ENCODE measurements at regions of chr1 and their contacts with region 1.

Region 1: DNA sequence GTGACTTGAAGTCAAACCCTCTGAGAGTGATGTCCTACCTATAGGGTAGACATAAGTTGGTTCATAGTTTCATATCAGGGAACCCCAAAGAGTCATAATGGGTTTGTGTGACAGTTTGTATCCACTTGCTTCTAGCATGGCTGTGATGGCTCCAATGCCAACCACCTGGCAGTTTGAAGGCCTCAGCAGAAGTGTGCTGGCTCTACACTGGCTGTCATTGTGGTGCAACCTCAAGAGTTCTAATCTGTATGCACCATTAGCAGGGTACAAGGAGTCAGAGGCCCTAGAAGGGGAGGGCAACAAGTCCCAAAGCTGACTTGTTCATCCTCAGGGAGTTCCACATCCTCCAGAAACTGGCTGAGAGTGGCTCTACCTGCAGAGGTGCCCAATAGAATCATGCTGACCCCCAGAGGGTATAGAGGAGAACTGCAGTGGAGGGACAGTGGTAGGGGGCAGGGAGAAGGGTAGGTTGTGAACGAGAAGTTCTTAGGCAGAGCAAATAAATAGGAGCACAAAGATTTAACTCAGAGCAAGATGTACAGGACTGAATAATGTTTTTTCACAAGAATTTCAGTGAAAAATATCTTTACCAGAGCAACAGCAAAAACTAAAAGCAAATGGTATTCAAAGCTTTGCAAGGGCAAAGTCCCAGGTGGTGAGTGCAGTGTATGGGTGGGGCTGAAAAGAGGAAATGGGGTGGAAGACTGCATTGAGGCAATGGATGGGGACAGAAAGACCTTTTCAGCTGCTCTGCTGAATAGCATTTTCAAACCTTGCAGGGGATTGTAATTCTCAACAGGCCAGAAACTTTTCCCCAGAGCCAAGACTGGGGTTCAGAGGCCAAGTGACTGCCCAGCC is 3.2 kb downstream of the FCRL2 start:
- DNase-seq: peak; percentile 78
- ATAC-seq: peak; percentile 86
- H3K4me3 ChIP-seq: peak overlapping the region in 4 of 5 experiments; percentile 36 to 57 (median 39)
- H3K4me3 Mint-ChIP-seq: peak overlapping the region; percentile 54
- H3K27ac ChIP-seq: peak overlapping the region; percentile 50 to 62
- H3K27ac Mint-ChIP-seq: peak overlapping the region; percentile 57
- H3K4me1 ChIP-seq: peaks cover 78% of the 10 kb centered on the region in 2 donors
- H3K4me1 Mint-ChIP-seq: peaks cover 80% of the 10 kb centered on the region
- H3K27me3 ChIP-seq: no peaks in the 10 kb centered on the region
- H3K27me3 Mint-ChIP-seq: no peaks in the 10 kb centered on the region
- CTCF ChIP-seq: peak; percentile 75

Region 2: GRCh38 chr1:157691285-157691920 is 82.3 kb before region 1 on chr1:
- CTCF ChIA-PET with region 1: interaction called, 56 read pairs
- POLR2A ChIA-PET with region 1: no interaction called
- intact Hi-C with region 1: loop called (anchors 2 kb)
- DNase-seq: peak; percentile 51
- ATAC-seq: peak; percentile 41
- H3K4me3 ChIP-seq: no peak overlapping the region
- H3K4me3 Mint-ChIP-seq: no peak overlapping the region
- H3K27ac ChIP-seq: peak overlapping the region in 1 of 2 donors; percentile 32
- H3K27ac Mint-ChIP-seq: peak overlapping the region; percentile 54
- H3K4me1 ChIP-seq: peaks cover 40 to 68% of the 10 kb centered on the region in 2 donors
- H3K4me1 Mint-ChIP-seq: peaks cover 77% of the 10 kb centered on the region
- H3K27me3 ChIP-seq: no peaks in the 10 kb centered on the region
- H3K27me3 Mint-ChIP-seq: no peaks in the 10 kb centered on the region
- CTCF ChIP-seq: peak; percentile 73

Region 3: DNA sequence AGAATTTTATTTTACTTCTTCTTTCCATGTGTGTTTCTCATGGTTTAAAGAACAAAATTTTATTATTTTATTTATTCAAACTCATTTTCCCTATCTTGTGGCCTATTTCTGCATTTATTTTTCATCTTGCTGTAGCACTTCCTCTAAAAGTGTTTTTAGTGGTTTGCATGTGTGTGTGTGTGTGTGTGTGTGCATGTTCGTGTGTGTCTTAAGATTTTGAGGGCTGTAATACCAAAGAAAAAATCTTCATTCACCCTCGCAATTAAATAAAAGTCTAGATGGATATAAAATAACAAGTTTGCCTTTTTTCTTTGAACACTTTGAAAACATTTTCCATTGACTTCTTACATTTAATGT is 48.5 kb before region 1 on chr1:
- CTCF ChIA-PET with region 1: interaction called, 7 read pairs
- POLR2A ChIA-PET with region 1: interaction called, 6 read pairs
- intact Hi-C with region 1: loop called (anchors 2 kb)
- DNase-seq: peak; percentile 86
- ATAC-seq: peak; percentile 21
- H3K4me3 ChIP-seq: peak overlapping the region in 1 of 5 experiments; percentile 45
- H3K4me3 Mint-ChIP-seq: peak overlapping the region; percentile 71
- H3K27ac ChIP-seq: peak overlapping the region; percentile 80 to 94
- H3K27ac Mint-ChIP-seq: peak overlapping the region; percentile 98
- H3K4me1 ChIP-seq: peaks cover 65 to 69% of the 10 kb centered on the region in 2 donors
- H3K4me1 Mint-ChIP-seq: peaks cover 74% of the 10 kb centered on the region
- H3K27me3 ChIP-seq: no peaks in the 10 kb centered on the region
- H3K27me3 Mint-ChIP-seq: no peaks in the 10 kb centered on the region
- CTCF ChIP-seq: no peak

Region 4: GRCh38 chr1:157806431-157807149 is 32.9 kb after region 1 on chr1:
- CTCF ChIA-PET with region 1: interaction called, 66 read pairs
- POLR2A ChIA-PET with region 1: interaction called, 5 read pairs
- intact Hi-C with region 1: loop called (anchors 5 kb)
- DNase-seq: peak; percentile 92
- ATAC-seq: peak; percentile 92
- H3K4me3 ChIP-seq: peak overlapping the region; percentile 2 to 45 (median 28)
- H3K4me3 Mint-ChIP-seq: peak overlapping the region; percentile 84
- H3K27ac ChIP-seq: peak overlapping the region; percentile 71 to 83
- H3K27ac Mint-ChIP-seq: peak overlapping the region; percentile 87
- H3K4me1 ChIP-seq: peaks cover 86 to 98% of the 10 kb centered on the region in 2 donors
- H3K4me1 Mint-ChIP-seq: peaks cover 87% of the 10 kb centered on the region
- H3K27me3 ChIP-seq: no peaks in the 10 kb centered on the region
- H3K27me3 Mint-ChIP-seq: no peaks in the 10 kb centered on the region
- CTCF ChIP-seq: no peak

Region 5: GRCh38 chr1:157852476-157852875 is 78.8 kb after region 1 on chr1:
- CTCF ChIA-PET with region 1: interaction called, 7 read pairs
- POLR2A ChIA-PET with region 1: no interaction called
- intact Hi-C with region 1: loop called (anchors 5 kb)
- DNase-seq: no peak
- ATAC-seq: no peak
- H3K4me3 ChIP-seq: no peak overlapping the region
- H3K4me3 Mint-ChIP-seq: no peak overlapping the region
- H3K27ac ChIP-seq: no peak overlapping the region
- H3K27ac Mint-ChIP-seq: no peak overlapping the region
- H3K4me1 ChIP-seq: peaks cover 32 to 40% of the 10 kb centered on the region in 2 donors
- H3K4me1 Mint-ChIP-seq: peaks cover 62% of the 10 kb centered on the region
- H3K27me3 ChIP-seq: no peaks in the 10 kb centered on the region
- H3K27me3 Mint-ChIP-seq: no peaks in the 10 kb centered on the region
- CTCF ChIP-seq: no peak

Region 6: DNA sequence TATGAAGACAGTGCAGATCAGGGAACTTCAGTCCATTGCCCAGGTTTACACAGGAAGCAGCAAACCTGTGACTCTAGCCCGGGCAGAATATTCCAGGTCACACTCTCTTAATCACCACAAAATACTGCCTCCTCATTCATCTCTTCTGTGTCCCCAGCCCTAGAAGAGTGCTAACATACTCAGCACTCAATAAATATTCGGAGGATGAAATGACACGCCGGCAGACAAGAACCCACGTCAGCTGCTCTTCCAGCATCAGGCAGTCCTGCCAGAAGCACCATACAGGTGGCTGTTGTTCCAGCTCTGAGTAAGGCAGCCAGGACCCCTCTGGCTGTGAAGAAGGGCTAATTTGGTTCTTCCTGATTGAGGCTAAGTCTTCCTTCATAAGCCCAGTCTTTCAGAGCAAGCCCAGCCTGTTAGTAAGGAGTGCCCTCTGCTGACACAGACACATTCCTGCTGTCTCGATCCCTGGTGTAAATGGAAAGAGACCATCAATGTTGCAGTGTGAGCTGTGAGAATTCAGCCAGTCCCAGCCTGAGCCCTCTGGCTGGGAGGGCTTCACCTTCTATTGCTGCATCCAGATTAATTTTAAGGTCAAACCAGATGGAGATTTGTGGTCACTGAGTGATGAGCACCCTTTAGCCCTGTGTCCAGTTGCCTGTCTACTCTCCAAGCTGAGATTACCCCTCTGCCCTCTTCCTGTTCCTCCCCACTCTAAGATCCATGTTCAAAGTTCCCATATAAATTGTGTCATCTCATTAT is 174.8 kb after region 1 on chr1:
- CTCF ChIA-PET with region 1: interaction called, 4 read pairs
- POLR2A ChIA-PET with region 1: no interaction called
- intact Hi-C with region 1: loop called (anchors 10 kb)
- DNase-seq: peak; percentile 63
- ATAC-seq: peak; percentile 53
- H3K4me3 ChIP-seq: no peak overlapping the region
- H3K4me3 Mint-ChIP-seq: no peak overlapping the region
- H3K27ac ChIP-seq: no peak overlapping the region
- H3K27ac Mint-ChIP-seq: no peak overlapping the region
- H3K4me1 ChIP-seq: peaks cover 17 to 18% of the 10 kb centered on the region in 2 donors
- H3K4me1 Mint-ChIP-seq: peaks cover 27% of the 10 kb centered on the region
- H3K27me3 ChIP-seq: peaks cover 0 to 8% (median 0%) of the 10 kb centered on the region in 4 experiments
- H3K27me3 Mint-ChIP-seq: peaks cover 12% of the 10 kb centered on the region
- CTCF ChIP-seq: peak; percentile 67

Measured in B cell (primary cell).